ENCODE measurements at regions of chr2 and their contacts with region 1.

Region 1: DNA sequence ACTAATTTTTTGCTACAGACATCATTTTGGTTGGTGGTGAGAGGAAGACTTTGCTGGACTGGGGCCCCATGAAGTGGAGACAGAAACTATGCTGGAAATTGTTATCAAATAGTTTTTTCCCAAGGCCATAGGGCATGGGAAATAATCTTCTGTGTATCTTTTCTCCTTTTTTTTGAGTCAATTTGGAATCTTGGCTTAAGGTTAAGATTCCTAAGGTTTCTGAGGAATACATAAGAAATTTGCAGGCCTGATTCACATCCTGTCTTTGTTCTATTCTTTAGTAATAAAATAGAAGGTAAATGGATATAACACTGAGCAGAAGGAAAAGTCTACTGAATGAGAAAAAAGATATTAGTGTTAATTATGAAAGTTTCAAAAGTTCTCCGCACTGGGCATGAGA is 16.6 kb downstream of the SMC6 start:
- DNase-seq: no peak
- ATAC-seq: no peak
- H3K4me3 ChIP-seq: no peak overlapping the region
- H3K4me3 Mint-ChIP-seq: no peak overlapping the region
- H3K27ac ChIP-seq: no peak overlapping the region
- H3K27ac Mint-ChIP-seq: no peak overlapping the region
- H3K4me1 ChIP-seq: no peaks in the 10 kb centered on the region
- H3K4me1 Mint-ChIP-seq: peaks cover 0 to 6% (median 0%) of the 10 kb centered on the region in 3 donors
- H3K27me3 ChIP-seq: no peaks in the 10 kb centered on the region
- H3K27me3 Mint-ChIP-seq: no peaks in the 10 kb centered on the region

Region 2: GRCh38 chr2:17573085-17573803 is 163.7 kb before region 1 on chr2:
- CTCF ChIA-PET with region 1: no interaction called
- POLR2A ChIA-PET with region 1: no interaction called
- DNase-seq: no peak
- ATAC-seq: no peak
- H3K4me3 ChIP-seq: no peak overlapping the region
- H3K4me3 Mint-ChIP-seq: no peak overlapping the region
- H3K27ac ChIP-seq: no peak overlapping the region
- H3K27ac Mint-ChIP-seq: no peak overlapping the region
- H3K4me1 ChIP-seq: no peaks in the 10 kb centered on the region
- H3K4me1 Mint-ChIP-seq: no peaks in the 10 kb centered on the region
- H3K27me3 ChIP-seq: peaks cover 4 to 6% of the 10 kb centered on the region in 2 experiments
- H3K27me3 Mint-ChIP-seq: peaks cover 4 to 13% of the 10 kb centered on the region in 2 donors

Region 3: GRCh38 chr2:17689010-17689409 is 48.0 kb before region 1 on chr2:
- CTCF ChIA-PET with region 1: no interaction called
- POLR2A ChIA-PET with region 1: interaction called in 1 of 2 experiments, 11 read pairs
- DNase-seq: no peak
- ATAC-seq: no peak
- H3K4me3 ChIP-seq: no peak overlapping the region
- H3K4me3 Mint-ChIP-seq: no peak overlapping the region
- H3K27ac ChIP-seq: no peak overlapping the region
- H3K27ac Mint-ChIP-seq: no peak overlapping the region
- H3K4me1 ChIP-seq: no peaks in the 10 kb centered on the region
- H3K4me1 Mint-ChIP-seq: no peaks in the 10 kb centered on the region
- H3K27me3 ChIP-seq: no peaks in the 10 kb centered on the region
- H3K27me3 Mint-ChIP-seq: no peaks in the 10 kb centered on the region

Region 4: GRCh38 chr2:17911491-17912260 is 174.7 kb after region 1 on chr2:
- CTCF ChIA-PET with region 1: no interaction called
- POLR2A ChIA-PET with region 1: no interaction called
- DNase-seq: no peak
- ATAC-seq: no peak
- H3K4me3 ChIP-seq: no peak overlapping the region
- H3K4me3 Mint-ChIP-seq: no peak overlapping the region
- H3K27ac ChIP-seq: no peak overlapping the region
- H3K27ac Mint-ChIP-seq: no peak overlapping the region
- H3K4me1 ChIP-seq: no peaks in the 10 kb centered on the region
- H3K4me1 Mint-ChIP-seq: no peaks in the 10 kb centered on the region
- H3K27me3 ChIP-seq: peaks cover 0 to 6% of the 10 kb centered on the region in 2 experiments
- H3K27me3 Mint-ChIP-seq: peaks cover 13 to 21% of the 10 kb centered on the region in 2 donors